Activated naive CD4-positive, alpha-beta T cell treated with anti-CD3 and anti-CD28 coated beads for 36 hours (primary cell): ENCODE measurements at regions of chr4 and their contacts with region 1.

Region 1: GRCh38 chr4:109947457-109947856 is 34.8 kb downstream of the EGF start:
- DNase-seq: no peak
- H3K4me3 Mint-ChIP-seq: no peak overlapping the region
- H3K27ac Mint-ChIP-seq: peak overlapping the region; percentile 65
- H3K4me1 Mint-ChIP-seq: peaks cover 27% of the 10 kb centered on the region
- H3K27me3 Mint-ChIP-seq: no peaks in the 10 kb centered on the region

Region 2: GRCh38 chr4:109821185-109821584 is 126.3 kb before region 1 on chr4:
- CTCF ChIA-PET with region 1: no interaction called
- intact Hi-C with region 1: loop called (anchors 1 kb)
- DNase-seq: peak; percentile 13
- H3K4me3 Mint-ChIP-seq: no peak overlapping the region
- H3K27ac Mint-ChIP-seq: no peak overlapping the region
- H3K4me1 Mint-ChIP-seq: peaks cover 57% of the 10 kb centered on the region
- H3K27me3 Mint-ChIP-seq: no peaks in the 10 kb centered on the region